CD8-positive, alpha-beta T cell (primary cell): ENCODE measurements at regions of chr5 and their contacts with region 1.

Region 1: GRCh38 chr5:139517683-139518564 is 35.4 kb upstream of the STING1 start:
- DNase-seq: peak; percentile 82 to 97 (median 90)
- ATAC-seq: peak; percentile 92
- H3K4me3 ChIP-seq: peak overlapping the region; percentile 58 to 63
- H3K4me3 Mint-ChIP-seq: peak overlapping the region; percentile 88
- H3K27ac ChIP-seq: peak overlapping the region; percentile 60 to 79
- H3K27ac Mint-ChIP-seq: peak overlapping the region; percentile 96
- H3K4me1 ChIP-seq: peaks cover 11% of the 10 kb centered on the region
- H3K4me1 Mint-ChIP-seq: peaks cover 23% of the 10 kb centered on the region
- H3K27me3 ChIP-seq: no peaks in the 10 kb centered on the region
- H3K27me3 Mint-ChIP-seq: no peaks in the 10 kb centered on the region
- CTCF ChIP-seq: peak; percentile 96

Region 2: DNA sequence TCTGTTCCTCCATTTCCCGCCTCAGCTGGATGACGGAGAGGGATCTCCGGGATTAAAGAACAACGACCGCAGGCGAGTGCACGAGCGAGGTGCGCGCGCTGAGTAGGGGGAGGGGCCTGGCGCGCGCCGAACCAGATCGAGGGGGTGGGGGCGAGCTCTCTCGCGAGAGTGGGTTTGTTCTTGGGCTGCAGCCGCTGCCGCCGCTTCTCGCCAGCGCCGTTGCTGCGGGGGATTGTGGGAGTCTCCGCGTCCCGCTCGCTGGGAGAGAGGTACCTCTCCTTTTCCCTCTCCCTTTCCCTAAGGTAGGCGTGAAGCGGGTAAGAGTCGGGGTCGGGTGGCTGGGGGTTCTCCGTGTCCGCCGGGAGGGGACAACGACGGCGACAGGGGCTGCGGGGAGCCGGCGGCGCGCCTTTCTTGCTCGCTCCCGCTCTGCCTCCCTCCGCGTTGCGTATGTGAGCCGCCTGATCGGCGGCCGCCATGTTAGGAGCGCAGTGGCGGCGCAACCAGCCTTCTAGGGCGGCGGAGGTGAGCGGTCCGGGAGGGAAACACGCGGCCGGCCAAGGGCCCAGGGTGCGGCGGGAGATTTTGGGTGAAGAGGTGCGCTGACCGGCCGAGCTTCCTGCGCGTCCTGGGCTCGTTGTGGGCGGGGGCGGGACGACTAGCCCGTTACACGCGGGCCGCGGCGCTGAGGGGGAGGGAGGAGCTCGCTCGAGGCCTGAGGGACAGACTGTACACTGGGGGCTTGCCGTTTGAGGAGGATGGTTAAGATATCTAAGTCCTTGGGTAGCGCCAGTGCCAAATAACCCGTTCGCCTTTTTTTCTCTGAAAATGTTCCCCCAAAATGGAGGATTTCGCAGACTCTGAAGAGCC is 224.2 kb before region 1 on chr5 and contains the start of gene MATR3:
- CTCF ChIA-PET with region 1: no interaction called
- POLR2A ChIA-PET with region 1: no interaction called
- intact Hi-C with region 1: loop called (anchors 5 kb)
- DNase-seq: peak; percentile 88 to 95 (median 93)
- ATAC-seq: peak; percentile 90
- H3K4me3 ChIP-seq: peak within 1 kb of the TSS; percentile 72 to 94
- H3K4me3 Mint-ChIP-seq: peak within 1 kb of the TSS; percentile 98
- H3K27ac ChIP-seq: peak within 1 kb of the TSS; percentile 98
- H3K27ac Mint-ChIP-seq: peak within 1 kb of the TSS; percentile 98
- H3K4me1 ChIP-seq: peaks cover 34% of the 10 kb centered on the region
- H3K4me1 Mint-ChIP-seq: peaks cover 41% of the 10 kb centered on the region
- H3K27me3 ChIP-seq: no peaks in the 10 kb centered on the region
- H3K27me3 Mint-ChIP-seq: no peaks in the 10 kb centered on the region
- CTCF ChIP-seq: no peak
- total RNA-seq, gene MATR3: 420 to 430 TPM

Region 3: GRCh38 chr5:139422307-139422893 is 95.5 kb before region 1 on chr5:
- CTCF ChIA-PET with region 1: interaction called, 473 read pairs
- POLR2A ChIA-PET with region 1: interaction called, 24 read pairs
- intact Hi-C with region 1: loop called (anchors 1 kb)
- DNase-seq: peak in 8 of 9 experiments; percentile 15 to 86 (median 52)
- ATAC-seq: peak; percentile 99
- H3K4me3 ChIP-seq: no peak overlapping the region
- H3K4me3 Mint-ChIP-seq: no peak overlapping the region
- H3K27ac ChIP-seq: no peak overlapping the region
- H3K27ac Mint-ChIP-seq: no peak overlapping the region
- H3K4me1 ChIP-seq: no peaks in the 10 kb centered on the region
- H3K4me1 Mint-ChIP-seq: peaks cover 5% of the 10 kb centered on the region
- H3K27me3 ChIP-seq: no peaks in the 10 kb centered on the region
- H3K27me3 Mint-ChIP-seq: no peaks in the 10 kb centered on the region
- CTCF ChIP-seq: peak; percentile 89

Region 4: GRCh38 chr5:139458580-139459406 is 59.1 kb before region 1 on chr5:
- CTCF ChIA-PET with region 1: interaction called, 9 read pairs
- POLR2A ChIA-PET with region 1: no interaction called
- intact Hi-C with region 1: loop called in 1 of 2 experiments (anchors 2 kb)
- DNase-seq: peak; percentile 58 to 95 (median 77)
- ATAC-seq: peak; percentile 98
- H3K4me3 ChIP-seq: no peak overlapping the region
- H3K4me3 Mint-ChIP-seq: peak overlapping the region; percentile 57
- H3K27ac ChIP-seq: peak overlapping the region in 1 of 2 experiments; percentile 33
- H3K27ac Mint-ChIP-seq: peak overlapping the region; percentile 94
- H3K4me1 ChIP-seq: peaks cover 52% of the 10 kb centered on the region
- H3K4me1 Mint-ChIP-seq: peaks cover 61% of the 10 kb centered on the region
- H3K27me3 ChIP-seq: no peaks in the 10 kb centered on the region
- H3K27me3 Mint-ChIP-seq: no peaks in the 10 kb centered on the region
- CTCF ChIP-seq: no peak

Region 5: GRCh38 chr5:139492700-139493192 is 25.2 kb before region 1 on chr5:
- CTCF ChIA-PET with region 1: interaction called, 34 read pairs
- POLR2A ChIA-PET with region 1: interaction called, 3 read pairs
- intact Hi-C with region 1: no loop called
- DNase-seq: no peak
- ATAC-seq: peak; percentile 29
- H3K4me3 ChIP-seq: no peak overlapping the region
- H3K4me3 Mint-ChIP-seq: peak overlapping the region; percentile 58
- H3K27ac ChIP-seq: no peak overlapping the region
- H3K27ac Mint-ChIP-seq: no peak overlapping the region
- H3K4me1 ChIP-seq: peaks cover 9% of the 10 kb centered on the region
- H3K4me1 Mint-ChIP-seq: peaks cover 23% of the 10 kb centered on the region
- H3K27me3 ChIP-seq: no peaks in the 10 kb centered on the region
- H3K27me3 Mint-ChIP-seq: no peaks in the 10 kb centered on the region
- CTCF ChIP-seq: no peak

Region 6: DNA sequence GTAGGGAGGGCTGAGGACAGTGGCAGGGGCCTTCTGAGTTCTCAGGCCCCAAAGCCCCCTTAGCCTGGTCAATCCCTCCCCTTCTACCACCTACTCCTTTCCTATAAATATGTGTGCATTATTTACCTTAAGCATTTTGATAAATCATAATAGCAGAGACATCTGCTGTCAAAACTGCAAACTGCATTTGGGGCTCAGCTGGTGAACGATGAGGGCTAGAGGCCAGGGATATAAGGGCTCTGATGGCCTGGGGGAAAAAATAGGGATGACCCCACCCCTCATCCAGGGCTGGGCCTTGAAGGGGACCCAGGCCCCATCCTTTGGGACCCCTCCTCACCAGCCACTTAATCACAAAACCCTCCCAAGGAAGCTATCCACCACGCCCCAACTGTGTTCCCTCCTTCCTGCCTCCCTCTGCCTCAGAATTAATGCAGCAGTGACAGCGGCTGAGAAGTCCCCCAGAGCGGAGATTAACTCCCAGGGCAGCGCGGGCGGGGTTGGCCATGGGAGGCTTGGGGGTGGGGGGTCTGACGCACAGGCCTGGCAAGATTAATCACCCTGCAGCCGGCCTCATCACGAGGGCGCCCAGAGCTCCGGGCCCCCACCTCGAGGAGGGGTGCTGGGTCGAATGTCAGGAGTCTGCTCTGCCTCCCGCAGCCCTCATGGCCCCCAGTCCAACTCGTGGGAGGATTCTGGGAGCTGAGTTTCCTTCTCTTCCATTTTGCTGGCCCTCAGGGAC is 172.3 kb after region 1 on chr5:
- CTCF ChIA-PET with region 1: interaction called, 7 read pairs
- POLR2A ChIA-PET with region 1: no interaction called
- intact Hi-C with region 1: loop called (anchors 1 to 10 kb)
- DNase-seq: peak in 4 of 9 experiments; percentile 22 to 64 (median 38)
- ATAC-seq: peak; percentile 77
- H3K4me3 ChIP-seq: no peak overlapping the region
- H3K4me3 Mint-ChIP-seq: no peak overlapping the region
- H3K27ac ChIP-seq: no peak overlapping the region
- H3K27ac Mint-ChIP-seq: no peak overlapping the region
- H3K4me1 ChIP-seq: peaks cover 6% of the 10 kb centered on the region
- H3K4me1 Mint-ChIP-seq: peaks cover 19% of the 10 kb centered on the region
- H3K27me3 ChIP-seq: no peaks in the 10 kb centered on the region
- H3K27me3 Mint-ChIP-seq: no peaks in the 10 kb centered on the region
- CTCF ChIP-seq: peak; percentile 44